HEK293T (cell line): ENCODE measurements at regions of chr1 and their contacts with region 1.

Region 1: GRCh38 chr1:171313835-171314320 is at the start of gene FMO4:
- DNase-seq: peak; percentile 96

Region 2: DNA sequence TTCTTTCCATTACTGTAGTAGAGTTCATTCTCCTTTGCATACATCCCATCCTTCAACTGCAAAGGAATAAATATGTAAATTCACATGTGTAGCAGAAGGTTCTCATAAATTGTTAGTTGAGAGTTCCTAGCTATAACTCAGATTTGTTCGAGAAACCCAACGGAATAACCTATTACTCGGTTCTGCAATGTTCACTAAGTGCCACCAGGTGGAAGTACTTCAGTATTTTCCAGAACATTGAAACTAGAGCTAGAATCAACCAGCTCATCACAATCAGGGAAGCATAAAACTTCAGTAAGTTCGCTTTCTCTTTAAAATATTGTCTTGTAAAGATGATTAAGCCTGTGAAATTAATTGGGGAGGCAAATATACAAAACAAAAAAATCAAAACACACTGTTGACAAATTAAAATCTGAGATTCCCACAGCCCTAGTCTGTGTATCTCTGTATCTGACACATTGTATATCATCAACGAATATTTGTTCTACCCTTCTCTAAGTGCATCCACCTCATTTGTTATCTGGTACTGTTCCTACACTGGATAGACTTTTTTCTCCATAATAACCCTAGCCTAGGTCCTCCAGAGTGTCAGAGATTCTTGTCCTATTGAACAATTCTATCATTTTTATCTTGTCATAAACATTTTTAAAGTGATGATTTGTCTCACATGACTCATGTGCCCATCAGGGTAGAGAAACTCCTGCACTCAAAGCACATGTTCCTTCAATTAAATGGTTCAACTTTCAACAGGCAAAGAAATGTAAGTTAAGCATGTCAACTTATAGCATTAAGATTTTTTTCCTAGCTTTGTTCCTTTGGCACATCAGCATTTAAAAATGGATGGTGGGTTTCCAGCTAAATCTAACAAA is 346.6 kb before region 1 on chr1:
- CTCF ChIA-PET with region 1: interaction called, 15 read pairs
- POLR2A ChIA-PET with region 1: no interaction called
- DNase-seq: peak; percentile 42

Region 3: DNA sequence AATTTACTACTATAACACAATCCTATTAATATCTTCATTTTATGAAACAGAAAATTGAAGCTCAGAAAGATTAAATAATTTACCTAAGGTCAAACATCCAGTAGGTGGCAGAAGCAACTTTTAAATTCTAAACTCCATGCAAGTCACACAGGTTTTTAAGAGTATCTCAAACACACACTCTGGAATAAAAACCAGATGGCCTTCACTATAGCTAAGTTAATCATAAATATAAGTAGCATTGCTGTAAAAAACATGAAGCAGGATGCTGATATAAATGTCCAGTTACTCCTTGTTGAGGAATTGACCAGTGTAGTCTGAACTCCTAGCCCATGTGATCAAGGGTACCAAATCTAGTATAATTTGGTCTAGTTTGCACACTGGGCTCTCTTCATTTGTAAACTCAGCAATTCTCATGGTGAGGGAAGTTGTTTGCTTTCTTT is 232.5 kb before region 1 on chr1:
- CTCF ChIA-PET with region 1: interaction called, 10 read pairs
- POLR2A ChIA-PET with region 1: no interaction called
- DNase-seq: no peak

Region 4: DNA sequence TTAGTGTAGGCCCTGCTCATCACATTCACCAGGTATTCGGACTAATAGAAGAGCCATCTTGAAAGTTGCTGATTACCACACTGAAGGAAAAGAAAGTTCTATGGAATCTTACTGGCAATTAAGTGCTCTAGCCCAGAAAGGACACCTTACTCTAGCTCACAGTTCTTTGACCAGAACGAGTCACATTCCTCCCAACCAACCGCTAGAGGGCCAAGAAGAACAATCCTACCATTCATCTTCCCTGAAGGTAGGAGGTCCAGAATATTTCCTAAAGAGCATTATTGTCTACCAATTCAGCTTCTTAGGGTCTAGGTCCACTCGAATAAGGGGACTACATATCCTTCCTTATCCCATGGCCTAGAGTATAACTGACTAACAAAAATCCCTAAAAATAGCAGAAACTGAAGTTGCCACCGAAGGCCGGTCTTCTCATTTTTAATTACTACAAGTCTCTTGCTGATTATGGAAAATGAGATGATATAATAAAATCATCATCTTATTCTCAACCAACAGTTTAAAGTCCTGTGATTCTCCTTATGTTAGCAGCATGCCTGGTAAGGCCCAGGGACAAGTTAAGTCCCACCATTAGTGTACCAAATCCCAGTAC is 68.3 kb before region 1 on chr1:
- CTCF ChIA-PET with region 1: interaction called, 19 read pairs
- POLR2A ChIA-PET with region 1: interaction called, 5 read pairs
- DNase-seq: peak; percentile 66